ENCODE measurements at regions of chr5 and their contacts with region 1.

Region 1: DNA sequence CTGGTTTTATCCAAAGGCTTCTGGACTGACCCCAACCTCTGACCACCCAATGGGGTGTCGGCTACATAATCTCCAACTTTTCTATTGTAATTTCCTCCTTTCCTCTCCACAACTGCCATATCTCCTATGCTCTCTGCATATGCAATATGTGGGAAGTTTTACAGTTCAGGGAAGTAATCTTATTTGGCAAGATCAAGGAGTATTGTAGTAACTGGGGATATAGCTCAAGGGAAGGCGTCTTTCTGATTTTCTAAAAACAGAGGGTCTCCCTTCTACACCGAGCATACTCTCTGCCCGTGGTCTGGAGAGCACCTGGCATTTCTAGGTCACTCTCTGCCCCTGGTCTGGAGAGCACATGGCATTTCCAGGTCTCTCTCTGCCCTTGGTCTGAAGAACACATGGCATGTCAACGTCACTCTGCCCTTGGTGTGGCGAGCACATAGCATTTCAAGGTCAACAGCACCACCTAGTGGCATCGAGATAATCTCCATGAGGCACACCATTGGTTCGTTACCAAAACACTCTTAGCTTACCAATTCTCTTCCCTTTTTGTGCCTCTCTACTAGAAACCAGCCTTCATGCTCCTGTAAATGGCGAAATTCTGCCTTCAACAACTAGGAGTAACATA is 616.4 kb upstream of the NUDT12 start:
- DNase-seq: peak; percentile 66
- H3K4me3 ChIP-seq: no peak overlapping the region
- H3K27ac ChIP-seq: no peak overlapping the region
- H3K4me1 ChIP-seq: peaks cover 4% of the 10 kb centered on the region
- H3K27me3 ChIP-seq: no peaks in the 10 kb centered on the region
- CTCF ChIP-seq: peak; percentile 50

Region 2: DNA sequence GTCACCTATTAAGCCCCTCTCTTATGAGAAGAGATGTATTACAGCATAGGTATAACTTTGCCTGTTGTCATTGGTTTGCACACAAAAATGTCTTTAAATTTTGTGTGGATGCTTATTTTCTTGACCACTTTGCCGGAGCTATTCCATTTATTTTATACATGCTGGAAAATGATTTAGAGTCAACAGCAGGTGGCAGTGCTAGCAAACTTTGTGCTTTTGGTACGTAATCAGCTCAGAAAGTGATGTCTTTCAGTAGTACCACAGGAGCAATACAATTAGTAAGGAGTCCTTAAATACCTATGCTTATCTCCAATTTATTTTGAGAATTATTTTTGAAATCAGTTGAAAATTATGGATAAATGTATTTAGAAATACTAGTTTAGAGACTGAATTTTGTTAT is 596.6 kb before region 1 on chr5:
- CTCF ChIA-PET with region 1: interaction called, 3 read pairs
- POLR2A ChIA-PET with region 1: no interaction called
- intact Hi-C with region 1: loop called (anchors 1 kb)
- DNase-seq: peak; percentile 71
- H3K4me3 ChIP-seq: no peak overlapping the region
- H3K27ac ChIP-seq: no peak overlapping the region
- H3K4me1 ChIP-seq: peaks cover 6% of the 10 kb centered on the region
- H3K27me3 ChIP-seq: no peaks in the 10 kb centered on the region
- CTCF ChIP-seq: peak; percentile 69

Region 3: DNA sequence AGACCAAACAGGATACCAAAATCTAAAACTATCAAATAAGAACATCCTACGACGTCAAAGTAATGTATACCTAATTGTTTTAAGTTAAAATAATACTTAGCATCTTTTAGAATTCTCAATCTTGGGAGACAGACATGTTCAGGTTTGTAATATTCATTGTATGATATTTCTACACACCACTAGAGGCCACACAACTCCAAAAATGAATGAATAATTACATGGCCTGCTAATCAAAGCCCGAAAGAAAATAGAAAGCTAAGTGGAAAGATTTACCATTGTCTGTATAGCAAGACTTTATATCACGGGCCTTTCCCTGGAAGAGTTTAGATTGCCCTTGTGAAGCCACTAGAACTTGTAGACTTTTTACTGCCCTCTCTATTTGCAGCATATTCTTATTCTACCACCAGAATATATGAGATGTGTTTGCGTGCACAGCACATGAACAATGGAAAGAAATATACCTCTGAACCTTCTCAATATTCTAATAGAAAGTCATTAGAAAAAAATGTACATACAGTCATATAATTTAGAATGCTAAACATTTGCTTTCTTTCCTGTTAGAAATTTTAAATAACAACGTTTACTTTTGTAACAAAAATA is 236.3 kb before region 1 on chr5:
- CTCF ChIA-PET with region 1: no interaction called
- POLR2A ChIA-PET with region 1: no interaction called
- intact Hi-C with region 1: loop called (anchors 10 kb)
- DNase-seq: peak; percentile 38
- H3K4me3 ChIP-seq: no peak overlapping the region
- H3K27ac ChIP-seq: no peak overlapping the region
- H3K4me1 ChIP-seq: no peaks in the 10 kb centered on the region
- H3K27me3 ChIP-seq: no peaks in the 10 kb centered on the region
- CTCF ChIP-seq: peak; percentile 52

Region 4: DNA sequence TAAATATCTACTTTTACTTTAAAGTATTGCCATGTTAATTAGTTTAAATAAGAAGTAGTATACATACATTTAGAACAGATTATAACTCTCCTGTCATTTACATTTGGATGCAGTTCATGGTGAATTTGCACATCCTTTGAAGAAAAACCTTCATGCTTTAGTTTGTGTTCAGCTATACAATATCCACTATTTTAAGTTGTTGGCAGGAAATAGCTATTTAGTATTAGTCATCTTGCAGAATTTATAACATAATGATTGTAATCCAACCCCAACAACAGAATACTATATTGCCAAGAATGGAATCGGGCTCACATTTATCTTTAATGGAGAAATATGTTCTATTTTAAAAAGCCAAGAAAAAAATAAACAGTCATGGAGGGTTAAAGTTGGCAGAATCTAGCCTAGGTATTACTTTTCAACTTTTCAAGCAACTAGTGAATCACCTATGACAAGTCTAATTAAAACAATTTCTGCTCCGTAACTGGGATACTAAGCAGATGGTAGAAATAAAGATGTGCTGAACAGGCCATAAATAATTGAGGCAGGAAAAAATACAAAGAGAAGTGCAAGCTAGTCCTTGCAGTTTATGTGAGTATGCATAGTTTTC is 554.2 kb after region 1 on chr5:
- CTCF ChIA-PET with region 1: no interaction called
- POLR2A ChIA-PET with region 1: no interaction called
- intact Hi-C with region 1: no loop called
- DNase-seq: peak; percentile 82
- H3K4me3 ChIP-seq: no peak overlapping the region
- H3K27ac ChIP-seq: no peak overlapping the region
- H3K4me1 ChIP-seq: peaks cover 26% of the 10 kb centered on the region
- H3K27me3 ChIP-seq: no peaks in the 10 kb centered on the region
- CTCF ChIP-seq: no peak